OCI-LY7 (cell line): ENCODE measurements at regions of chr20 and their contacts with region 1.

Region 1: DNA sequence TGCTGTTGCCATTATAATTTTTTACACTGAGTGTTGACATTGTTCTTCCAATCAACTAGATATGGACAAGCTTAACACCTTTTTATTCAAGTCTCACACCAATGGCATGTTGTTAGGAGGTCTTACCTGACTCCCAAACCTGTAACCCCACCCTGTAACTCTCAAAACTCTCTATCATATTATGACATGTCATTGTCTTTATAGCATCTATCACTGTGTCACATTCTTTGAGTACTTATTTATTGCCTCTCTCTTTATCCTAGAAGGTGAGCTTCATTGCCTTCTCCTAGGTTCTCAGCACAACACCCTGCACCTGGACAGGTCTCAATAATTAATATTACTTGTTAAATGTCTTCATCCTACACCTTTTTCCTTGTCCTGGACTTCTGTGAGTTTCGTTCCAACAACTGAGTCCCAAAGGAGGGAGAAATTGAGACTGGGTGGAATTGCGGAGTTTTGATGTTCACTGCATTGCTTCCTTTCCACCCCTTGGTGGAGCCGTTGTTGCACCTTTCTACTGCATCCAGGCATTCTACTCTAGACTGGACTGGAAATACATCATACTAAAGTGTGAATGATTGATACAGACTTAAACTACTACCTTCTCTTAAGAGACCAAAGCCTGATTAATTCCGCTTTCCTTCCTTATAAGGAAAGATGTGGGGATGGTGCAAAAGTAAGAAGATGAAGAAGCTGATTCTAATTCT is 338.0 kb upstream of the CHD6 start:
- DNase-seq: peak; percentile 23
- H3K4me3 ChIP-seq: no peak overlapping the region
- H3K27ac ChIP-seq: no peak overlapping the region
- H3K4me1 ChIP-seq: no peaks in the 10 kb centered on the region
- CTCF ChIP-seq: peak; percentile 78

Region 2: DNA sequence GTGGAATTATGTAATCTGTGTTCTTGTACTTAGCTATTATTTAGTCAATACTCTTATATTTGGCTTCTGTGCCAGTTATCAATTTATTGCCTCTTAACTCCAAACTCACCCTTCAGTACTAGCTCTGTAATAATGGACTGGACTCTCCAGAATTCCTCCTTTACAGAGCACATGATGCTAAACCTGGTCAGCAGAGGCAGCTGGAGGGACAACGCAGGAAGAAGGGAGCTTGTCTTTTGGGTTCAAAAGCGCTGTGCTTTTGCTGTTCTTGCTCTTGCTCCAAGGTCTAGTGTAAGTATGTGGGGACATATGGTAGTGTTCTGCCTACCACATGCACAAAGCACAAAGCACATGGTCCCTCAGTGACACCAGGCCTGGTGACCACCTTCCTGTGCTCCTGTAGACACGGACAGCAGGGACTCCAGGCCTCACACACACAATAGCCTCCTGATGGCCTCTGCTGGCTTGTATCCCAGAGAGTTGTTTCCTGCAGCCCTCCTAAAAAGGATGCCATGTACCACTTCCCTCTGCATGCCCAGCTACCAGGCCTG is 384.1 kb before region 1 on chr20:
- CTCF ChIA-PET with region 1: no interaction called
- POLR2A ChIA-PET with region 1: no interaction called
- intact Hi-C with region 1: no loop called
- DNase-seq: no peak
- H3K4me3 ChIP-seq: no peak overlapping the region
- H3K27ac ChIP-seq: no peak overlapping the region
- H3K4me1 ChIP-seq: peaks cover 13% of the 10 kb centered on the region
- CTCF ChIP-seq: peak; percentile 45

Region 3: GRCh38 chr20:41796593-41796992 is 159.6 kb before region 1 on chr20:
- CTCF ChIA-PET with region 1: no interaction called
- POLR2A ChIA-PET with region 1: no interaction called
- intact Hi-C with region 1: no loop called
- DNase-seq: no peak
- H3K4me3 ChIP-seq: no peak overlapping the region
- H3K27ac ChIP-seq: no peak overlapping the region
- H3K4me1 ChIP-seq: peaks cover 3% of the 10 kb centered on the region
- CTCF ChIP-seq: no peak

Region 4: GRCh38 chr20:43187476-43188233 is 1231.5 kb after region 1 on chr20:
- CTCF ChIA-PET with region 1: no interaction called
- POLR2A ChIA-PET with region 1: no interaction called
- intact Hi-C with region 1: loop called (anchors 5 kb)
- DNase-seq: peak; percentile 49
- H3K4me3 ChIP-seq: no peak overlapping the region
- H3K27ac ChIP-seq: no peak overlapping the region
- H3K4me1 ChIP-seq: no peaks in the 10 kb centered on the region
- CTCF ChIP-seq: peak; percentile 97